ENCODE measurements at regions of chr5 and their contacts with region 1.

Region 1: GRCh38 chr5:140244525-140245025 is 58.3 kb downstream of the PFDN1 start:
- DNase-seq: peak; percentile 89
- H3K4me3 Mint-ChIP-seq: no peak overlapping the region
- H3K27ac Mint-ChIP-seq: peak overlapping the region; percentile 60
- H3K4me1 Mint-ChIP-seq: peaks cover 47% of the 10 kb centered on the region
- H3K27me3 Mint-ChIP-seq: no peaks in the 10 kb centered on the region

Region 2: DNA sequence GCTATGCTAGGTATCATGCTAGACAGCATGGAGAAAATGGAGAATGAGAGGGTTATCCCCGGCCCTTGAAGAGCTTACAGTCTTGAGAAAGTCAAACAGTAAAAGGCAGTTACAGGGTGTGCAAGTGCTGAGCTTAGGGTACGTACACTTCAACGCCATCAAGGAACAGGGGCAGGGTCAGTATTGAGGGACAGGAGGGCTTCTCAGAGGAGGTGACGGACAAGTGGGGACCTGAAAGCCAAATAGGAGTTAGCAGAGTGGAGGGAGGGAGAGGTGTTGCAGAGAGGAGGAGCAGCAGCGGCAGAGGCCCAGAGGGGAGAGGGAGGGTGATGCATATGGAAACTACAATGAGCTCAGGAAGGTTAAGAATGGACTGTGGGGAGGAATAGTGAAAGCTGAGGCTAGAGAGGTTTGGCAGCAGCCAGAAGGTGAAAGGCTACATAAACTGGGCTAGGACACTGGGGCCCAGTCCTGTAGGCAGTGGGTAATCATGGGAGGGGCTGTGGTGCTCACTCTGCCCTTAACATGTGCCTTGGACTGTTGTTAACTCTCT is 289.4 kb before region 1 on chr5:
- CTCF ChIA-PET with region 1: no interaction called
- POLR2A ChIA-PET with region 1: no interaction called
- DNase-seq: no peak
- H3K4me3 Mint-ChIP-seq: no peak overlapping the region
- H3K27ac Mint-ChIP-seq: no peak overlapping the region
- H3K4me1 Mint-ChIP-seq: no peaks in the 10 kb centered on the region
- H3K27me3 Mint-ChIP-seq: peaks cover 11% of the 10 kb centered on the region

Region 3: GRCh38 chr5:140284013-140284412 is 39.4 kb after region 1 on chr5:
- CTCF ChIA-PET with region 1: interaction called, 13 read pairs
- POLR2A ChIA-PET with region 1: interaction called, 3 read pairs
- DNase-seq: no peak
- H3K4me3 Mint-ChIP-seq: no peak overlapping the region
- H3K27ac Mint-ChIP-seq: no peak overlapping the region
- H3K4me1 Mint-ChIP-seq: peaks cover 31% of the 10 kb centered on the region
- H3K27me3 Mint-ChIP-seq: no peaks in the 10 kb centered on the region

Region 4: GRCh38 chr5:140346348-140347101 is 102.0 kb after region 1 on chr5 and contains the start of gene HBEGF:
- CTCF ChIA-PET with region 1: interaction called, 951 read pairs
- POLR2A ChIA-PET with region 1: interaction called, 34 read pairs
- DNase-seq: peak; percentile 63
- H3K4me3 Mint-ChIP-seq: peak within 1 kb of the TSS; percentile 96
- H3K27ac Mint-ChIP-seq: peak within 1 kb of the TSS; percentile 94
- H3K4me1 Mint-ChIP-seq: peaks cover 64% of the 10 kb centered on the region
- H3K27me3 Mint-ChIP-seq: peaks cover 3% of the 10 kb centered on the region
- total RNA-seq, gene HBEGF: 67.9 to 69.1 TPM

Region 5: GRCh38 chr5:140357726-140358093 is 113.1 kb after region 1 on chr5:
- CTCF ChIA-PET with region 1: interaction called, 951 read pairs
- POLR2A ChIA-PET with region 1: interaction called, 23 read pairs
- DNase-seq: peak; percentile 87
- H3K4me3 Mint-ChIP-seq: peak overlapping the region; percentile 71
- H3K27ac Mint-ChIP-seq: peak overlapping the region; percentile 61
- H3K4me1 Mint-ChIP-seq: peaks cover 25% of the 10 kb centered on the region
- H3K27me3 Mint-ChIP-seq: peaks cover 5% of the 10 kb centered on the region

Region 6: GRCh38 chr5:140372971-140373487 is 128.5 kb after region 1 on chr5:
- CTCF ChIA-PET with region 1: interaction called, 14 read pairs
- POLR2A ChIA-PET with region 1: no interaction called
- DNase-seq: peak; percentile 43
- H3K4me3 Mint-ChIP-seq: no peak overlapping the region
- H3K27ac Mint-ChIP-seq: no peak overlapping the region
- H3K4me1 Mint-ChIP-seq: peaks cover 3% of the 10 kb centered on the region
- H3K27me3 Mint-ChIP-seq: no peaks in the 10 kb centered on the region